ENCODE measurements at regions of chr7 and their contacts with region 1.

Region 1: GRCh38 chr7:79078273-79078672 is 375.2 kb downstream of the MAGI2 start:
- DNase-seq: no peak
- ATAC-seq: no peak
- H3K4me3 ChIP-seq: no peak overlapping the region
- H3K27ac ChIP-seq: no peak overlapping the region
- H3K4me1 ChIP-seq: no peaks in the 10 kb centered on the region
- H3K27me3 ChIP-seq: no peaks in the 10 kb centered on the region
- CTCF ChIP-seq: no peak
- POLR2A ChIP-seq: no peak

Region 2: DNA sequence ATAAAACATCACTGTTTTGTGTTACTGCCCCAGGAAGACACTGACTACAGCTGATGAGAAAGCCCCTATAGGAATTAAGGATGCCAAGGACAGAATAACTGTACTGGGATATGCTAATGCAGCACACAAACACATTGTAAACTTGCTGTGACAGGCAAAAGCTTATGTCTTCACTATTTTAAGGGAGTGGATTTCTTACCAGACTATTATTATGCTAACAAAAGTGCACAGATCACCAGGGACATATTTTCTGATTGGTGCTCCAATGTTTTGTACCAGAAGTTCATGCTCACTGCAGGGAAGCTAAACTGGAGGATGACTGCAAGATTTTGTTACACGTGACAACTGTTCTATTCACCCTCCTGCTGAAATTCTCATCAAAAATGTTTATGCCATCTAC is 1589.3 kb before region 1 on chr7:
- intact Hi-C with region 1: no loop called
- DNase-seq: no peak
- ATAC-seq: no peak
- H3K4me3 ChIP-seq: no peak overlapping the region
- H3K27ac ChIP-seq: no peak overlapping the region
- H3K4me1 ChIP-seq: no peaks in the 10 kb centered on the region
- H3K27me3 ChIP-seq: no peaks in the 10 kb centered on the region
- CTCF ChIP-seq: no peak
- POLR2A ChIP-seq: no peak

Region 3: DNA sequence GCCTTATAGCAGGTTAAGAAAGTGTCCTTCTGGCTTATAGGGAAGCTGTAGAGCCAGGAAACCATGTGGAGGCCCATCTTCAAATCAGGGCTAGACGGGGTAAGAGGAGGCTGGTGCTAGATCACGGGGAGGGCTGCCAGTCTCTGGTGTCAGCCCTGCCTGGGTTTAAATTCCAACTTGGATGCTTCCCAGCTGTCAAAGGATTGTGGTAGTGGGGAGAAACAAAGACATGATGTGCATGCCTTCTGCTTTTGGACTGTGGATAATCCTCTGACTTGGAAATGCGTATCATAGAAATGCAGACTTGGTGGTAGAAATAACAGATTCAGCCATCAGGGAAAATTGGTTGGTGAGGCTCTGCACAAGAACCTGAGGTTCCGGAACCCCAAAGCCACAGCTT is 954.1 kb before region 1 on chr7:
- intact Hi-C with region 1: no loop called
- DNase-seq: no peak
- ATAC-seq: no peak
- H3K4me3 ChIP-seq: no peak overlapping the region
- H3K27ac ChIP-seq: no peak overlapping the region
- H3K4me1 ChIP-seq: no peaks in the 10 kb centered on the region
- H3K27me3 ChIP-seq: no peaks in the 10 kb centered on the region
- CTCF ChIP-seq: no peak
- POLR2A ChIP-seq: no peak

Region 4: GRCh38 chr7:78985509-78985908 is 92.8 kb before region 1 on chr7:
- intact Hi-C with region 1: no loop called
- DNase-seq: no peak
- ATAC-seq: no peak
- H3K4me3 ChIP-seq: no peak overlapping the region
- H3K27ac ChIP-seq: no peak overlapping the region
- H3K4me1 ChIP-seq: no peaks in the 10 kb centered on the region
- H3K27me3 ChIP-seq: no peaks in the 10 kb centered on the region
- CTCF ChIP-seq: no peak
- POLR2A ChIP-seq: no peak

Region 5: DNA sequence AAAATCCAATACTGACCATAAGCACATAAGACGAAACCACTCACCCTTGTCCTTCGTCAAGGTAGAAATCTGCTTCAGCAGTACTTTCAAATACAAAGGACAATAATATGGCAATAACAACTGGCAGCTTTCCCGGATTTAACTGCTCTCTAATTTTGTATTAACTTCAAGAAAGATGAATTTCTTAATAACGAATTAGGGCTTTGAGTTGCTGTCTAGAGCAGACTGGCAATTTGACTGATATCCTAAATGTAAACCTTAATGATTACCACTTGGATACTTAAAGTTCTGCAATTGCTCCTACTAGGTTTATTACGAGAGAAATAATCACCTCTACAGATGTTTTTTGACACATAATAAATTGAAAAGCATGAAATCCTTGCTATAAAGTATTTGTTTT is 43.5 kb before region 1 on chr7:
- intact Hi-C with region 1: loop called in 1 of 10 experiments (anchors 10 kb)
- DNase-seq: no peak
- ATAC-seq: no peak
- H3K4me3 ChIP-seq: no peak overlapping the region
- H3K27ac ChIP-seq: no peak overlapping the region
- H3K4me1 ChIP-seq: no peaks in the 10 kb centered on the region
- H3K27me3 ChIP-seq: no peaks in the 10 kb centered on the region
- CTCF ChIP-seq: no peak
- POLR2A ChIP-seq: no peak

Region 6: DNA sequence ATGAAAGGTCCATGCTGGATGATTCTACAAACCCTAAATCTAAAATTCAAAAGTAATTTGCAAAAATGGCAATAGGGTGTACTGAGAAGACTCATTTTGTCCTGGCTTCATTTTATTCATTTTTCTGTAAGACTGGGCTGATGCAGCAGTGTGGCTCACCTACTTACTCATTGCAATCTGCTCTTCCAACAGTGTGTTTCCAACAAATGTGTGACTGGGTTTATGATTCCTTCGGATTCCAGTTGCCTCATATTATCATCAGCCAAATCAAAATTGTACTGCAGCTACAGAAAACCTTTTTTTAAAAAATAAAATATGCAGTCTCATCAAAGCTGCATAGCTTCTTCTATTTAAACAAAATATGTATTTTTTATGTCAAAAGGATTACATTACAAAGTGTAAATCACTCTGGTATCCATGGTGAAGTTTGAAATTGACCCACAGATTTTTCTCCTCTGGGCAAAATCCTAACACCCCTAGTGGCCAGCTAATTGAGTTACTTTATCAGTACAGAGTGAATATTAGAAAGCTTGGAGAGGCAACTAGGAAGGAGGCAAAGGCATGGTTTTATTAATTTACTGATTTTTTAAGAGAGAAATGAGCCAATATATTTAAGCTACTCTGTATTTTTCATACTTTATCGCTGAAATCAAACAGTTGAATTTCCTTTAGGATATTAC is 15.1 kb before region 1 on chr7:
- intact Hi-C with region 1: no loop called
- DNase-seq: no peak
- ATAC-seq: no peak
- H3K4me3 ChIP-seq: no peak overlapping the region
- H3K27ac ChIP-seq: no peak overlapping the region
- H3K4me1 ChIP-seq: no peaks in the 10 kb centered on the region
- H3K27me3 ChIP-seq: no peaks in the 10 kb centered on the region
- CTCF ChIP-seq: peak in 1 of 12 donors; percentile 7
- POLR2A ChIP-seq: no peak